Lower leg skin (tissue), 4 donors: ENCODE measurements at regions of chr7 and their contacts with region 1.

Region 1: DNA sequence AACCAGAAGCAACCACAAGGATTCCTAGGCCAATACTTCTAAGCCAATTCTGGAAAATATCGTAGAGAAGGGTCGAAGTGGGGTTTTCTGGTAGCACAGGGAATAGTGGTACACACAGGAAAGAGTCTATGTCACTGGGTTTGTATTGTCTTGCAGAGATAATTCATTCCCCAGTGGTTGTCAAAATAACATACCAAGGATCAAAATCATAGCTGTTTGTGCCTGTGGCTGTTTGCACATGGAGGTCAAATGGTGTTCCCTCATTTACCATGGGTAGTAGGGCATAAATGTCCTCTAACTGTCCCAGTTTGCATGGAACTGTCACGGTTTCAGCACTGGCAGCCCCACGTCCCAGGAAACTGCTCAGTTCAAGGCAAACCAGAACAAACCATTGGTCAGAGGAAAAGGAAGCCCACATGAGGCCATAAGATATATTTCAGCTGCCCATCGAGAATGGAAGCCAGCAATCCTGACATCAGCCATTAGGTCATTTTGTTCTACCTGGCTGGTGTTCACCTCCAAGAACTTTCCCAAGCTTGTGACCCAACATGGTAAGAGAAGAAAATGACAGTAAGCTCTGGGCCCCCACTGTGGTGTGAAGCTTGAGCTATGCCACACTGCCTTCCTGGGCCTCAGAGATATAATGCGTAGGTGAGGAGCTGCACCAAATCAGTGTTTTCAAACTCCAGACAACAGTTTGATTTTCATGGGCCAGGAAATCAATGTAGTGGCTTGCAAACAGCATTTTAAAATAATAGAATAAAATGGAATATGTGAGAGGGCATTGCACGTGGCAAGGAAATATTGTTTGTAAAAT is 53.9 kb upstream of the NFE2L3 start:
- DNase-seq: no peak
- H3K4me3 ChIP-seq: no peak overlapping the region
- CTCF ChIP-seq: no peak
- POLR2A ChIP-seq: no peak

Region 2: DNA sequence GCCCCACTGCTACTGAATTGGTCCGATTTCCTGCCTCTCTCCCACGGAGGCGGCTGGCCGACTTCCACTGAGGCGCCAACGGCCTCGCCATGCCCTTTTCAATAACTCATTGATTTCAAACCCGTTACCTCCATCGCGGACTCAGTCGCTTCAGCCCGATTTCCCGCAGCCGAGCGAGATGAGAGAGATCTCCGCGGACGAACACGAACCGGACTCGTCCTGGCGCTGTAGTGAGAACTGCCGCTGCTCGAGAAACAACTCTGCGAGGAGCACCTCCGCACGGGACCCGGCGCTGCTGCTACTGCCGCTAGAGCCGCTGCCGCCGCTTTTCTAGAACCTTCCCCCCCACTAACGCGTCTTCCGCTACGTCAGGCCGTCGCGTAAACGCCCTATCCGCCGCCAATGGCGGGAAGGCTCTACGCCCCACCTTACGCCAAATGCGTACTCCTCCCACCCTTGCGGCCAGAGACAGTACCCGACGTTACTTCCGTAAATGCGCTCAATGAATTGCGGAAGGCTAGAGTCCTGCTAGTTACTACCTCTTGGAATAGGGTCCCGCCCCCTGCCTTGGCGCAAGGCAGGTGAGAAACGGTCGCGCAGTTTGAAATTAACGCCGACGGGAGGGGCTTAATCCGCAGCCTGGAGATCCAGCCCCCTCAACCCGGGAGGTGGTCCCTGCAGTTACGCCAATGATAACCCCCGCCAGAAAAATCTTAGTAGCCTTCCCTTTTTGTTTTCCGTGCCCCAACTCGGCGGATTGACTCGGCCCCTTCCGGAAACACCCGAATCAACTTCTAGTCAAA is 102.6 kb after region 1 on chr7 and contains the start of gene HNRNPA2B1:
- intact Hi-C with region 1: loop called (anchors 2 kb)
- DNase-seq: peak; percentile 98 to 99
- H3K4me3 ChIP-seq: peak within 1 kb of the TSS; percentile 95
- CTCF ChIP-seq: no peak
- POLR2A ChIP-seq: peak in 1 of 2 donors; percentile 100
- total RNA-seq, gene HNRNPA2B1: 78.1 to 133 (median 99.4) TPM